ENCODE measurements at regions of chr13 and their contacts with region 1.

Region 1: GRCh38 chr13:81872581-81872980 is 1531.7 kb upstream of the SPRY2 start:
- DNase-seq: peak; percentile 38
- ATAC-seq: peak; percentile 63
- H3K4me3 ChIP-seq: no peak overlapping the region
- H3K27ac ChIP-seq: no peak overlapping the region
- H3K4me1 ChIP-seq: peaks cover 19% of the 10 kb centered on the region
- H3K27me3 ChIP-seq: peaks cover 1 to 22% of the 10 kb centered on the region in 2 experiments; a peak in 4 of 5 replicates
- CTCF ChIP-seq: peak; percentile 52
- EP300 ChIP-seq: no peak
- POLR2A ChIP-seq: no peak
- RAD21 ChIP-seq: no peak

Region 2: DNA sequence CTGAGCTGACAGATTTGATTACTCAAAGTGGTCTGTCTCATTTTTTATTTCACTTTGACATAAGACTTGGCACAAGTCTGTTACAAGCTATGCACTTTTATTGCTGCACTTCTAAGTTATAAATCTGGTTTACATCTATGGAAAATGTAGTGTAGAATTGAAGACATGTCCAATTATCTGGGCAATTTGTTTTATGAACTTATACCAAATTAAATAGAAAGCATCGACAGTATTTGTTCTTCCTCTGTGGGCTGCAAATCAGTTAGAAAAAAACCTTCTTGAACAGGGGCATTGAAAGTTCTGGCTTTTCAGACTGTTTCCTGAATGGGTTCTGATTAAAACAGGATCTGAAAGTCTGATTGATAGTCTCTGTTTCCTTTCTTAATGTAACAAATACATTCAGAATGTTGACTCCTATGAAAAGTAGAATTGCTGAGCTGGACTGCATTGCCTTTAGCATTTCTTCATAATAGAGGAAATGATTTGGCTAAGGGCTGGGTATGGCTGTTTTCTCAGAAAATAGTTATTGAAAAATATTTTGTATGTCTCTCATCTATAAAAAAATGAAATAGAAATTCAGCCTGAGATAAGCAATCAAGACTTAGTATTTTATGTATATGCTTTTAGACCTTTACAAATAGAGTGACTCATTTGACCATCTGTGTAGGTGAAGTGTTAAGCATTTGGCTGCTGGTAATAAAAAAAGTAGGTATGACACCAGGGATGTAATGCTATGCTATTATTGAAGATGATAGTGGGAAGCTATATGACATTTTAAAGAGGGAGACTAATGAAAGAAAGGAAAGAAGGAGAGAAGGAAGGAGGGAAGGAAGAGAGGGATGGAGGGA is 1320.7 kb before region 1 on chr13:
- CTCF ChIA-PET with region 1: no interaction called
- POLR2A ChIA-PET with region 1: no interaction called
- in situ Hi-C with region 1: no loop called
- intact Hi-C with region 1: no loop called
- DNase-seq: no peak
- ATAC-seq: no peak
- H3K4me3 ChIP-seq: no peak overlapping the region
- H3K27ac ChIP-seq: no peak overlapping the region
- H3K4me1 ChIP-seq: no peaks in the 10 kb centered on the region
- H3K27me3 ChIP-seq: no peaks in the 10 kb centered on the region
- CTCF ChIP-seq: no peak
- EP300 ChIP-seq: no peak
- POLR2A ChIP-seq: no peak
- RAD21 ChIP-seq: no peak

Region 3: GRCh38 chr13:81540777-81541176 is 331.8 kb before region 1 on chr13:
- CTCF ChIA-PET with region 1: no interaction called
- POLR2A ChIA-PET with region 1: no interaction called
- in situ Hi-C with region 1: no loop called
- intact Hi-C with region 1: loop called (anchors 5 kb)
- DNase-seq: peak; percentile 1
- ATAC-seq: no peak
- H3K4me3 ChIP-seq: no peak overlapping the region
- H3K27ac ChIP-seq: no peak overlapping the region
- H3K4me1 ChIP-seq: no peaks in the 10 kb centered on the region
- H3K27me3 ChIP-seq: no peaks in the 10 kb centered on the region; a peak in 1 of 5 replicates
- CTCF ChIP-seq: no peak
- EP300 ChIP-seq: no peak
- POLR2A ChIP-seq: no peak
- RAD21 ChIP-seq: no peak